ENCODE measurements at regions of chr18 and their contacts with region 1.

Region 1: GRCh38 chr18:76405681-76406356 is 89.2 kb downstream of the ZNF516 start:
- DNase-seq: peak in 3 of 5 donors; percentile 11 to 67 (median 55)
- H3K4me3 ChIP-seq: no peak overlapping the region
- H3K27ac ChIP-seq: no peak overlapping the region
- H3K4me1 ChIP-seq: peaks cover 12% of the 10 kb centered on the region
- H3K27me3 ChIP-seq: no peaks in the 10 kb centered on the region
- CTCF ChIP-seq: peak in 2 of 3 donors; percentile 38 to 39
- EP300 ChIP-seq: no peak
- POLR2A ChIP-seq: no peak

Region 2: DNA sequence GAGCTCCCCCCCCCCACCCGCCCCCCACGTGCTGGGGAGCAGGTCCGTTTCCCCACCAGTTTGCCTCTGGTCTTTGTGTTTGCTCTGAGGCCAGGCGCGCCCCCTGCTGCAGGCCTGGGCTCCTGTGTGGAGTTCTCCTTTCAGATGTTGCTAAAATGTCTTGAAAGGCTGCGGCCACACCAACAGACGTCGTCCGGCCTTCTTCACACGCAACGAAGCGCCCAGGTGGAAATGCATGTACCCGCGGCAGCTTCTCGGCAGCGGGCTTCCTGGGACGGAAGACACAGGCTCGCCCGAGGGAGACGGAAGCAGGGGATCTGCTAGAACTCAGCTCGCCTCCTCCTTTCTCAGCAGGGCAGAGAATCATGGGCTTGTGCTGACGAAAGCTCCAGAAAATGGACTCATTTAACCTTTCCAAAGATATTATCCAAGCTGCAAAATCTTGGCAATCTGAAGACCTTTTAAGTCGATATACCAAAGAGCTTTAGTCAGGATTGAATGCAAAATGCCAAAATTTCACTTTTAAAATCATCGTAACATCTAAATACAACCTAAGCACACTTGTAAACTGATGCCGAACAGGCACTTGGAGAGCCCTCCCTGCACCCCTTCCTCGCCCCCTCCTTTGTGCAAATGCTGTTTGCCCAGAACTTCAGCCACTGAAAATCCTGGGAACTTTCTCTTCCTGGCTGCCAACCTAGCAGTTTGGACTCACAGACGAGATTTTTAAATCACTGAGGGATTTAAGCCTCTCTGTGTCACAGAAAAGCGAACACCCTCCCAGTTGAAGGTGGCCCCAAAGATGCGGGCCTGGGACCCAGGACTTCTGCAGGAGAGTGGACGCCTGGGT is 214.7 kb after region 1 on chr18:
- intact Hi-C with region 1: loop called in 1 of 4 experiments (anchors 5 kb)
- DNase-seq: peak; percentile 73 to 86 (median 82)
- H3K4me3 ChIP-seq: peak overlapping the region; percentile 24
- H3K27ac ChIP-seq: peak overlapping the region; percentile 85 to 88
- H3K4me1 ChIP-seq: peaks cover 5% of the 10 kb centered on the region
- H3K27me3 ChIP-seq: no peaks in the 10 kb centered on the region
- CTCF ChIP-seq: peak in 2 of 3 donors; percentile 40 to 56
- EP300 ChIP-seq: no peak
- POLR2A ChIP-seq: no peak

Region 3: DNA sequence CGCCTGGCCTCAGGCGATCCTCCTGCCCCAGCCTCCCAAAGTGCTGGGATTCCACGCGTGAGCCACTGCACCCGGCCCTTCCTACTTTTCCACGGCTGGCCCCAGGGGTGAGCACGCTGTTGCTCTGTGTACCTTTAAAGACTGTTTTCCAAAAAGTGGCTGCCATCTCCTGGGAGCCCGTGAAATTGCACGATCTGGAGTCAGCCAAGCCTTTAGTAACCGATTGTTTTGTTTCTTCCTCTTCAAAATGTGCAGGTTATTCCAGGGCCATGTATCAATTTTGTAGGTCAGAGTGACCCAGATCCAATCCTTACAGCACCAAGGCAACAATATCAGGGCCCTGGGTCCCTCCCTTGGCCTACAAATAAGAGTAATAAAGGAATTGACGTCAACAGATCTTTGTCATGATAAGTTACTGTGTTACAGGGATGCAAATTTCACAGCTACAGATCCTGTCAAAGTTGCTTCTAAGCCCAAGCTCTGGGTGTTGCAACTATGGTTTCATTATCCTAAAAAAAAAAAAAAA is 281.0 kb after region 1 on chr18:
- intact Hi-C with region 1: loop called in 2 of 4 experiments (anchors 10 kb)
- DNase-seq: peak; percentile 67 to 85 (median 81)
- H3K4me3 ChIP-seq: no peak overlapping the region
- H3K27ac ChIP-seq: peak overlapping the region in 1 of 2 donors; percentile 17
- H3K4me1 ChIP-seq: no peaks in the 10 kb centered on the region
- H3K27me3 ChIP-seq: no peaks in the 10 kb centered on the region
- CTCF ChIP-seq: peak; percentile 32 to 72 (median 56)
- EP300 ChIP-seq: no peak
- POLR2A ChIP-seq: no peak

Measured in ovary (tissue), 10 donors.